Sciatic nerve (tissue), 2 donors: ENCODE measurements at regions of chr9 and their contacts with region 1.

Region 1: DNA sequence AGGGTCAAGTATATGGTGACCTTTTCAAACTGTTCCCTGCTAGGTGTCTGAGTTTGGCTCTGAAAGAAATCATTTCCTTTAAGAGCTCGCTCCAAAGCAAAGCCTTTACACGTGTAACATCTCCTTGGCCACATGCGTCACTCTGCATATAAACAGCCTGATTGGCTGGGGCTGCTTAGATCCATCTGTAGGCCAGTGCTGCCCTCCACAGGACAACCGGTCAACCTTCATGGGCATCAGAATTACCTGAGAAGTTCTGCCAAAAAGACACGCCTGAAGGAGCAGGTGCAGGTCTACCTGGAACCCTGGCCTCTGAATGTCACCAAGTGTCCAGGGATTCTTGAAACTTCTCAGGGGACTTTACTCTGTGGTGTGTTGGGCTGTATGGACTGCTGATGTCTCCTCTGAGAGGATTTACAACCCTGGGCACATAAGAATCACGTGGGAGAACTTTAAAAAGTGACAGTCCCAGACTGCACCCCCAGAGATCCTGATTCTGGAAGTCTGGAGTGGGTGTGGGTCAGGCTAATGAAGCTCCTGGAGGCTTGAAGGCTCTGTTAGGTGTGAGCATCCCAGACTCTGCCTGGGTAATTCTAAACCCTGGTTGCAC is 497.6 kb downstream of the GADD45G start:
- DNase-seq: peak; percentile 86
- ATAC-seq: peak; percentile 91

Region 2: DNA sequence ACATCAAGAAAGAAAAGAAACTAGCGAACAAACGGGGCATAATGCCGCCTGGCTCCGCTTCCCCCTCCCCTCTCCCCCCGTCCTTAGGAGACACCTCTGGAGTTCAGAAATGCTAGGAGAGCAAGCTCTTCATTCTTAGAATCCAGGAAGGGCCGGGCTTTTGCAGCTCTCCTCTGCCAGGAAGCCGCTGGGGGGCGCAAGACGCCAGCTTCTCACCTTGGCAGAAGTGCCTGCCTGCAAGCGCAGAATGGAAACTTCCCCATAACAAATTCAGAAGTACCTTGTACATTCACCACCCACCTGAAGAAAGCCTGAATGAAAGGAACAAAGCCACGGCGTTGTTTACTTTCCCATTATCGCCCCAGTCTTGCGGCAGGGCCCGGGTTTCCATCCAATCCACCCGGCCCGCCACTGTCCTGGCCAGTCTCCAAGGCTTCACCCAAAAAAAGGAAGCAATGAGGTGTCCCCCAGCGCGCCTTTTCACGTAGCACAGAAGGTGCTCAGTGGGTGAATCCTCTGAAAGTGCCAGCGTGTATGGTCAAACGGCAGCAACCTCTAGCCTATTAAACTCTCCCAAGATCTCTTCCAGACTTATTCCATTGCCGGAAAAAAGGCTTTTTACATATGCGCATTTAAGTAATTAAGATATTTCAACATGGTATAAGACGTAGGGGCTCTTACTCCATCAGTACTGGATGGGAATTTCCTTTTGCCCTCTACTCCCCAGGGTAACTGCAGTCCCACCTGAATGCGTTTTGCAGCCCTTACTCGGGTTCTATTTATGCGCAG is 499.2 kb before region 1 on chr9:
- intact Hi-C with region 1: loop called (anchors 5 kb)
- DNase-seq: peak; percentile 94
- ATAC-seq: peak; percentile 70